PC-9 (cell line): ENCODE measurements at regions of chr13 and their contacts with region 1.

Region 1: DNA sequence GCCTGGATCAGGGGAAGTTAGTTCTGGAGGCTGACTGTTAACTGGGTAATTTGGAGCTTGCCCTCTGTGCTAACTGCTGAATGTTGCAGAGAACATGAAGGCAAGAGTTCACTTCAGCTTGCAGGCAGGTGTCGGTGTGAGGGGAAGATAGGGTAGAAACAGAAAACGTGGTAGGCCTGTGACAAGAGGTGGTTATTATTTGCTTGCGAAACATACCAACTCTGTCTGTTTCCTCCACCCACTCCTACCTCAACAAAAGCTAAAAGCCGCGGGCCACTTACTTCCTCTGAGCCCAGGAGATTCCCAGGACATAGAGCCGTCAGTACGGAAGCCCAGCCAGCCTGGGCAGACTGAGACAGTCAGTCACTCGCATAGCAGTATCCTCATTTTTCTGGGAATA is 119.2 kb upstream of the ABCC4 start:
- DNase-seq: peak in 1 of 2 experiments; percentile 49
- H3K4me3 ChIP-seq: no peak overlapping the region
- H3K27ac ChIP-seq: no peak overlapping the region
- H3K4me1 ChIP-seq: peaks cover 15% of the 10 kb centered on the region
- H3K27me3 ChIP-seq: no peaks in the 10 kb centered on the region
- CTCF ChIP-seq: no peak

Region 2: DNA sequence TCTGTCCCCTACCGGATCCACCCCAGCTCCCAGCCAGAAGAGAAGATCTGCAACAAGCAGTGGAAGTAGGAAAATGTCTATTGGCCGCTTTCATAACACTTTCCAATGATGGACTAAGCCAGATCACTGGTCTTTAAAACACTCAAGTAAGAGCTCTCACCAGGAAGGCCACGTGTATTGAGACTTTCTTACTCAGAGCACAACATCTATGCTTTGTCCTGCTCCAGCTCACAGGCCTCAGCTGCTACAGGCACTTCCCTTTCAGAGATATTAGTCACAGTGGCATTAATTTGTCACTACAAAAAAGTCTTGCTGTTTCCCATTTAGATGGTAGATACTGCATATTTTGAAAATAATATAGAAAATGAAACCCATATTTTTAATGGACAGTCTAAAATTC is 283.4 kb before region 1 on chr13:
- CTCF ChIA-PET with region 1: no interaction called
- POLR2A ChIA-PET with region 1: interaction called, 19 read pairs
- intact Hi-C with region 1: no loop called
- DNase-seq: no peak
- H3K4me3 ChIP-seq: no peak overlapping the region
- H3K27ac ChIP-seq: no peak overlapping the region
- H3K4me1 ChIP-seq: no peaks in the 10 kb centered on the region
- H3K27me3 ChIP-seq: no peaks in the 10 kb centered on the region
- CTCF ChIP-seq: no peak

Region 3: GRCh38 chr13:95494082-95494681 is 73.7 kb after region 1 on chr13:
- CTCF ChIA-PET with region 1: no interaction called
- POLR2A ChIA-PET with region 1: no interaction called
- intact Hi-C with region 1: no loop called
- DNase-seq: peak in 1 of 2 experiments; percentile 63
- H3K4me3 ChIP-seq: no peak overlapping the region
- H3K27ac ChIP-seq: no peak overlapping the region
- H3K4me1 ChIP-seq: peaks cover 16% of the 10 kb centered on the region
- H3K27me3 ChIP-seq: no peaks in the 10 kb centered on the region
- CTCF ChIP-seq: peak; percentile 93